ENCODE measurements at regions of chr22 and their contacts with region 1.

Region 1: DNA sequence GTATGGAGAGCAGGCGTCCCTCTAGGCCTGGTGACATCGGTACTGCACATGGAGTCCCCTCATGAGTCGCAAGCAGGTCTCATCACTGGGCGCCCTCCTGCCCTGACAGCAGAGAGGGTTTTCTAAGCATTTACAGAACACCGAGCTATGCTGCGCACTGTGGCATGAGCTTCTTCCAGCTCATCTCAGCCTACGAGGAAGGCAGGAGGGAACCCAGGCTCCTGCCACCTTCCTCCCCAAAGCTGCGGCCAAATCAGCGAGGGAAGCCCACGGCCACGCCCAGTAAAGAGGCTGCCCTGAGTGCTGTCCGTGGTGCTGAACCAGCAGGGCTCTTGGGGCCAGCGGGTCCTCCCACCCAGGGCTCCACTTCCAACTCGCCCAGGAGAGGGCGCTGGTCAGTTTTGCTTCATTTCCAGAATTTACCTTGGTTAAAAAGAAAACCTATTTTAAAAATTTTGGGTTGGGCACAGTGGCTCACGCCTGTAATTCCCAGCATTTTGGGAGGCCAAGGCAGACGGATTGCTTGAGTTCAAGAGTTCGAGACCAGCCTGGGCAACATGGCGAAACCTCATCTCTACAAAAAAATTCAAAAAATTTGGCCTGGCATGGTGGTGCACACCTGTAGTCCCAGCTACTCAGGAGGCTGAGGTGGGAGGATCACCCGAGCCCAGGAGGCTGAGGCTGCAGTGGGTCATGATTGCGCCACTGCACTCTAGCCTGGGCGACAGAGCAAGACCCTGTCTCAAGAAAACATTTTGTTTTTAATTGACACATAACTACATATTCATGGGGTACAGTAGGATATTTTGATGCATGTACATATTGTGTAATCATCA is 34.2 kb downstream of the PHF21B start:
- DNase-seq: peak; percentile 49 to 93 (median 72)

Region 2: GRCh38 chr22:45009881-45010531 is 34.4 kb after region 1 on chr22 and contains the start of gene PHF21B:
- intact Hi-C with region 1: loop called (anchors 5 kb)
- DNase-seq: peak; percentile 49 to 95 (median 74)

Region 3: DNA sequence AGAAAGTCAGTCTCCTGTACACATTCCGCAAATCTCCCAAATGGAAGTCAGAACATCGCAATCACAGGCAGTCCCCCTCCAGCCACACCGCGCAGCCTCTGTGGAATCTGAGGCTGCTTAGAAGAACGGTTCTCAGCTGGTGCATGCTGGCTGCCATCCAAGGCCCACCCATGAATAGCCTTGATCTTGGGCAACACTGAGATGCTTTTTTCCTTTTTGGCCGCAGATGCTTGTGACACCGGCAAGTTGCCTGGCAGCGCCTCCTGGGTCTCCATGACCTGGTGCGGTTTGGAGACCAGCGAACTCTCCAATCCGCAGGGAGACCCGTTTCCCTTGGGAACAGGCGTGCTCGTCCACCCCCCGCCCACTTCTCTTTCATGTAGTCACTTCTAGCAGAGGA is 60.5 kb after region 1 on chr22:
- intact Hi-C with region 1: loop called (anchors 10 kb)
- DNase-seq: peak in 9 of 10 donors; percentile 18 to 86 (median 42)

Region 4: DNA sequence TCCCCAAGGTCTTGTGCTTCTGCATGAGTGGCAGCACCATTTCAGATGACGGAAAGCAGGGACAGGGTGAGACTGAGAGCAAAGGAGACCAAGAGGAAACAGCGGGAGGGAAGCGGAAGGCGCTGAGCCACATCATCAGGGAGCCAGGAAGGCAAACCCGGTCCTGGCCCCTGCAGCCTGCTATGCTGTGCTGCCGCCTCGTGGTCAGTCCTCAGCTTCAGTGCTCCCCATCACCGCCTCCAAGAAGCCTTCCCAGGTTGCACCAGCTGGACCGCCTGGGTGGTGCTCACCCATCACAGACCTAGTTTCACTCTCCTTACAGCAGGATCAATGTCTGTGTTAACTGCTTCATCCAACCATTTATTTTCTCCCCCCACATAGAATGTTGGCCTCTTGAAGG is 107.2 kb after region 1 on chr22:
- intact Hi-C with region 1: no loop called
- DNase-seq: peak in 1 of 10 donors; percentile 37

Region 5: DNA sequence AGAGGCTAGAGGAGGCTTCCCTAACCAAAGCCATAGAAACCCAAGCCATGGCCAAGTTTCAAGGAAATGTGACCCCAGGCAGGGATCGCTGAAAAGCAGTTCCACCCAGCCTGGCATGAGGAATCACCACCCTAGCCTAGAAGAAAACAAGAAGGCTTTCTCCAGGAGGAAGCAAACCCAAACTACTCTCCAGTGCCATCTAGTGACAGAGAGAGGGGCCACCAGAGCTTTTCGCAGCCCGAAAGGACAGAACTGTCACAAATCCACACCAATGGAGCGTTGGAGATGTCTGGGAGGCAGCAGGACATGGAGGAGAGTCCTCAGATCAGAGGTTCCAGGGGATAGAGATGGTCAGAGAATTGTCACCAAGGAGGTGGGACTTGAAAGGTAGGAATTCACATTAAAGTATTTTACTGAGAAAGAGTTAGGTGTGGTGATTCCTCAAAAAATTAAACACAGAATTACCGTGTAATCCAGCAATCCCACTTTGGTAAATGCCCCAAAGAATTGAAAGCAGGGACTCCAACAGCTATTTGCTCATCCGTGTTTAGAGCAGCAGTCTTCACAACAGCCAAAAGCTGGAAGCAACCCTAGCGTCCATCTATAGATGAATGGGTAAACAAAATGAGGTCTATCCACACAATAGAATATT is 120.7 kb after region 1 on chr22:
- intact Hi-C with region 1: loop called (anchors 1 kb)
- DNase-seq: peak in 9 of 10 donors; percentile 32 to 95 (median 60)